Activated T-helper 2 cell treated with anti-CD3 and anti-CD28 coated beads, Interferon-gamma antibody, Interleukin-2, Interleukin-4, amounts not matched to agents 10 μg/mL and 5 μg/mL and 100 μg/mL, durations not matched to agents 14 hours and 24 hours and 36 hours (primary cell): ENCODE measurements at regions of chr1 and their contacts with region 1.

Region 1: DNA sequence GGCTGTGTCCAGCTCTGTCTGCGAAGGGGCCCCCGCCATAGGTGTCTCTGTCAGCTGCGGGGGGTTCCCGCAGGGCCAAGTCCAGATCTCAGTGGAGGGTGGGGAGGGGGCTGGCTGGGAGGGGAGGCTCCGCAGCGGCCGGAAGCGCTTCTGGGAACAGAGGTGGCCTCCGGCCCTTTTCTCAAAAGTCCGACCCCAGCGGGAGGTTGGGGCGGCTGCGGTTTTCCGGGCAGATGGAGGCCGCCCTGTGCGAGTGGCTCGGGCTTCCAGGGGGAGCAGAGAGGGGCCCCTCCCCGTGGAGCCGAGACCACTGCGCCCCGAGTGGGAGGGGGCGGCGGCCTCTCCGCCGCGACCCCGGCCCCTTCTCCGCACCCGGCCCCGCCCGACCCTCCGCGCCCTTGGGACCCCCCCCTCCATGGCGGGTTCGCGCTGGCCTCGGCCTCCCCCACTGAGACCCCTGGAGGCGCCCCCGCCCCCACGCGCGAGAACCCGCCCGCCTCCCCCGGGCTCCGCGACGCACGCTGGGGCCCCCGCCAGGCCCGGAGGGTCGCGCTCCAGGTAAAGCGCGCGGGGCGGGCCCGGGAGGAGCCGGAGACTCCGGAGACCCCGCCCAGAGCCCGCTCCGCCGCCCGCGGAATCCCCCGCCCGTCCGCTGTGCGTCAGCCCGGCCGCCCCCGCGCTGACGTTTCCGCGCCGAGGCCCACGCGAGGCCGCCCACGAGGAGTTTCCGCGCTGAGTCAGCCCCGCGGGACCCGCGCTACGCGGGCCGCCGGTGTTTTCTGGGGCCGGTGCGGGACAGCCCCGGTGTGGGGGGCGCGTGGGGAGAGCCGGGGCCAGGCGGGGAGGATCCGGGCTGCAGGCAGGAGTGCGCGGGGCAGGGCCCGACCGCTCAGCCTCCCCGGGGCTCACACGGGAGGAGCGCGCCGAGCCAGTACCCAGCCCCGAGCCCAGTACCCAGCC is 5.3 kb downstream of the TNFRSF18 start:
- DNase-seq: peak; percentile 73
- H3K4me3 Mint-ChIP-seq: peak overlapping the region; percentile 61
- H3K27ac Mint-ChIP-seq: peak overlapping the region; percentile 79
- H3K4me1 Mint-ChIP-seq: peaks cover 4% of the 10 kb centered on the region
- H3K27me3 Mint-ChIP-seq: no peaks in the 10 kb centered on the region

Region 2: DNA sequence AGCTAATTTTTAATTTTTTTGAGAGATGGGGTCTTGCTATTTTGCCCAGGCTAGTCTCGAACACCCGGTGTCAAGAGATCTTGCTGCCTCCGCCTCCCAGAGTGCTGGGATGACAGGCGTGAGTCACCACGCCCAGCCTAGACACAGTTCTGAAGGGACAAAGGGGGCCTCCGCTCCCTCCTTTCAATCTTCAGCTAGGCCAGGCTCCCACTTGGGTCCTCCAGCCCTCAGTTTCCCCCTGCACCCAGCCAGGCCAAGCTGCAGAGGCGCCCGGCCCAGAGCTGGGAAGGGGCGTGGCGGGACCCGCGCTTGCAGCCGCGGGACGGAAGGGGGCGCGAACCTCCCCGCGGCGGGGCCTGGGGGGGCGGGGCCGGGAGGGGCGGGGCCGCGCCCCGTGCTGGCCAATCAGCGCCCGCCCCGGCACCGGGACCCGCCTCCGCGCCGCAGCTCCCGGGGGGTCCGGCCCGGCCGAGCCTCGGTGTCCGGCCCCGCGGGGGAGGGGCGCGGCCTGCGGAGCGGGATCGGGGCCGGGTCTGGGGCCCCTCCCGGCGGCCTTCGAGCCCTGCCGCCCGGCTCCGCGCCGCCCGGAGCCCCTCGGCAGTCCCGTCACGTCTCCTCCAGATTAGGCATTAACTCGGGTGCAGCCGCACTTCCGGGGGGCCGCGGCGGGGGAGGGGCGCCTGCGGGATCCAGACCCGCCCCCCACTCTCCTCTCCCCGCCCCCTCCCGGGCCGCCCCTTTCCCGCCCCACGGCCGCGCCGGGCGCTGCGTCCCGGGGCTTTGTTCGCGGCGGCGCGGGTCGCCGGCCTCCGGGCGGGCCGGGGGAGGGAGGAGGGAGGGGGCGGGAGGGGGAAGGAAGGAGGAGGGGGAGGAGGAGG is 181.8 kb before region 1 on chr1:
- intact Hi-C with region 1: loop called (anchors 10 kb)
- DNase-seq: peak; percentile 73
- H3K4me3 Mint-ChIP-seq: peak overlapping the region; percentile 66
- H3K27ac Mint-ChIP-seq: no peak overlapping the region
- H3K4me1 Mint-ChIP-seq: peaks cover 11% of the 10 kb centered on the region
- H3K27me3 Mint-ChIP-seq: peaks cover 17% of the 10 kb centered on the region